ENCODE measurements at regions of chr10 and their contacts with region 1.

Region 1: DNA sequence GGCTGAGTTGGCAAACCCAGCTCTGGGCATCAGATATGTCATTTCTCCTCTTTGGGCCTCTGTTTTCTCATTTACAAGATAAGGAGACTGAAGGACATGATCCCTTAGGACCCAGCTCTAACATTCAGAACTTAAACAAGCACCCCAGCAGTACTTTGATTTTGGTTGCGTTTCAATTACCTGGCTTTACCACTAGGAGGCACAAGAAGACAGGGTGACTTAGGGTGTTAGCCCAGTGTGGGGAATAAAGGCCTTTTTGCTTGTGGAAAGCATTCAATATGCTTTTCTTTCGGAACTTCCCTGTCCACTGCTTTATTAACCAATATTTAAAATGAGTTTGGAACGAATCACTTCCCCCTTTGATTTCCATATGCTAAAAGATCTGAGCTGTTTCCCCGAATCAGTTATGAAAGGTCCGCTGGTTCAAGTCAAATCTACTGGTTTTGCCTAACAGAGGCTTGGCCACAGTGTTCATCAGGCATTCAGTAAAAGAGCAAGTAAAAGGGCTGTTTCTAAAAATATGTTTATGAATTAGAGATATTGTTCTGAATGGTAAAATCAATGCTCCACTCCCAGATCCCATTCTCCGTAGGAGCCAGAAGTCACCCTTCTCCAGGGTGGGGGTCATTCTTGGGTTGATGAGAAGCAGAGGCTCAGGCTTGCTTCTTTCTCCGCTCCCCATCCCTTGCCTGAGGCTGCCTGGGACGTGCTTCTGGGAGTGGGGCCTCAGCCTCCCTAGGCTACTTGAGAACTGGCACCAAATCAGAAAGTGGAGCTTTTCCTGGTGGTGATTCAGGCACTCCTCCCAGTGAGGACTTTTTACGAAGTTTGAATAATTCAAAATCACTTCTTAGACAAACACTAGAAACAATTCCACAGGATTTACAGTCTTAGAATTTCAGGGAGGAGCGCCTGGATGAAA is 105.5 kb downstream of the MYOF start:
- DNase-seq: peak in 10 of 14 experiments; percentile 8 to 84 (median 28)
- ATAC-seq: peak; percentile 84
- H3K4me3 ChIP-seq: no peak overlapping the region
- H3K4me3 Mint-ChIP-seq: no peak overlapping the region
- H3K27ac ChIP-seq: no peak overlapping the region
- H3K27ac Mint-ChIP-seq: no peak overlapping the region
- H3K4me1 ChIP-seq: peaks cover 5% of the 10 kb centered on the region
- H3K4me1 Mint-ChIP-seq: peaks cover 7% of the 10 kb centered on the region
- H3K27me3 ChIP-seq: no peaks in the 10 kb centered on the region
- H3K27me3 Mint-ChIP-seq: peaks cover 13% of the 10 kb centered on the region
- CTCF ChIP-seq: peak; percentile 96

Region 2: GRCh38 chr10:93413252-93413689 is 36.6 kb after region 1 on chr10:
- CTCF ChIA-PET with region 1: no interaction called
- POLR2A ChIA-PET with region 1: interaction called, 12 read pairs
- intact Hi-C with region 1: loop called in 1 of 2 experiments (anchors 2 kb)
- DNase-seq: peak in 13 of 14 experiments; percentile 7 to 76 (median 23)
- ATAC-seq: peak; percentile 86
- H3K4me3 ChIP-seq: peak overlapping the region; percentile 13
- H3K4me3 Mint-ChIP-seq: peak overlapping the region; percentile 57
- H3K27ac ChIP-seq: peak overlapping the region; percentile 41 to 75
- H3K27ac Mint-ChIP-seq: peak overlapping the region; percentile 80
- H3K4me1 ChIP-seq: peaks cover 65% of the 10 kb centered on the region
- H3K4me1 Mint-ChIP-seq: peaks cover 77% of the 10 kb centered on the region
- H3K27me3 ChIP-seq: no peaks in the 10 kb centered on the region
- H3K27me3 Mint-ChIP-seq: no peaks in the 10 kb centered on the region
- CTCF ChIP-seq: no peak

Region 3: DNA sequence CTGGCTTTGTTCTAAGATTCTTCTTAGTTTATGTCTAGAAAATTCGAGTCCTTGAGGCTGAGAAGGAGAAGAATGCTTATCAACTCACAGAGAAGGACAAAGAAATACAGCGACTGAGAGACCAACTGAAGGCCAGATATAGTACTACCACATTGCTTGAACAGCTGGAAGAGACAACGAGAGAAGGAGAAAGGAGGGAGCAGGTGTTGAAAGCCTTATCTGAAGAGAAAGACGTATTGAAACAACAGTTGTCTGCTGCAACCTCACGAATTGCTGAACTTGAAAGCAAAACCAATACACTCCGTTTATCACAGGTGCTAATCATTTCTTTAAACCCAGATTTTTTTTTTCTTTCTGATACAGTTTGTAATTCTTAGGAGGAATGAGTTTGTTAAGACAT is 126.4 kb after region 1 on chr10:
- CTCF ChIA-PET with region 1: interaction called, 13 read pairs
- POLR2A ChIA-PET with region 1: interaction called, 3 read pairs
- intact Hi-C with region 1: loop called in 1 of 2 experiments (anchors 5 kb)
- DNase-seq: peak in 3 of 14 experiments; percentile 23 to 26 (median 24)
- ATAC-seq: no peak
- H3K4me3 ChIP-seq: peak overlapping the region; percentile 25
- H3K4me3 Mint-ChIP-seq: peak overlapping the region; percentile 75
- H3K27ac ChIP-seq: peak overlapping the region in 1 of 2 donors; percentile 3
- H3K27ac Mint-ChIP-seq: peak overlapping the region; percentile 32
- H3K4me1 ChIP-seq: no peaks in the 10 kb centered on the region
- H3K4me1 Mint-ChIP-seq: peaks cover 22% of the 10 kb centered on the region
- H3K27me3 ChIP-seq: no peaks in the 10 kb centered on the region
- H3K27me3 Mint-ChIP-seq: no peaks in the 10 kb centered on the region
- CTCF ChIP-seq: no peak

Region 4: GRCh38 chr10:93515071-93516005 is 138.7 kb after region 1 on chr10:
- CTCF ChIA-PET with region 1: interaction called, 21 read pairs
- POLR2A ChIA-PET with region 1: no interaction called
- intact Hi-C with region 1: loop called (anchors 1 kb)
- DNase-seq: peak in 1 of 14 experiments; percentile 14
- ATAC-seq: no peak
- H3K4me3 ChIP-seq: no peak overlapping the region
- H3K4me3 Mint-ChIP-seq: no peak overlapping the region
- H3K27ac ChIP-seq: no peak overlapping the region
- H3K27ac Mint-ChIP-seq: no peak overlapping the region
- H3K4me1 ChIP-seq: no peaks in the 10 kb centered on the region
- H3K4me1 Mint-ChIP-seq: peaks cover 5% of the 10 kb centered on the region
- H3K27me3 ChIP-seq: no peaks in the 10 kb centered on the region
- H3K27me3 Mint-ChIP-seq: no peaks in the 10 kb centered on the region
- CTCF ChIP-seq: no peak

Region 5: DNA sequence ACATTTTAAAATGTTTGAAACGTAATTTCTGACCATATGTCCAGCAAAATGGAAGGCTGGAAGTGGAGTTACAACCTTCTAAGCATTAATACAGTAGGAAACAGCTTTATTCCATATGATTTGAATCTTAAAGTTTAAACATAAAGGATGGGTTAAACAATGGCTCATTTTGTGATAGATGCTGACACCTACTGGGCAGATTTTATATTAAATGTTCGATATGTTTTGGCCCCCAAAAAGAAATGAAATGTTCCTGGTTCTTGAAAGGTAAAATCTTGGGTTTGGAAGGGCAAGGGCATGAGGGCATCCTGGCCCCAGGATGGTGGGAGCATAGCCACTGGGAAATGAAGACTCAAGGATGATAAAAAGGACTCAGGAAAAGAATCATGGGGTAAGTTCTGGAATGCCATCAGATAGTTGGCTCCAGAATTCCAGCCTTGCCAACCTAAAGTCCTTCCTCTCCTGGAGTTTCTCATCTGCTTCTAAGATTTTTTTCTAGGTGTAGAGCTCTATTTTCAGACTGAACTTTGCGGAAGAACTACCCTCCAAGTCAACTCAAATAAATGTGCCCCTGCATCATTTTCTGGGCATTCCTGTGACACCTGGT is 482.5 kb after region 1 on chr10:
- CTCF ChIA-PET with region 1: no interaction called
- POLR2A ChIA-PET with region 1: no interaction called
- intact Hi-C with region 1: loop called in 1 of 2 experiments (anchors 5 kb)
- DNase-seq: peak in 3 of 14 experiments; percentile 6 to 15 (median 13)
- ATAC-seq: no peak
- H3K4me3 ChIP-seq: no peak overlapping the region
- H3K4me3 Mint-ChIP-seq: no peak overlapping the region
- H3K27ac ChIP-seq: no peak overlapping the region
- H3K27ac Mint-ChIP-seq: no peak overlapping the region
- H3K4me1 ChIP-seq: no peaks in the 10 kb centered on the region
- H3K4me1 Mint-ChIP-seq: no peaks in the 10 kb centered on the region
- H3K27me3 ChIP-seq: peaks cover 0 to 3% of the 10 kb centered on the region in 2 experiments
- H3K27me3 Mint-ChIP-seq: no peaks in the 10 kb centered on the region
- CTCF ChIP-seq: peak; percentile 57